ENCODE measurements at regions of chr3 and their contacts with region 1.

Region 1: GRCh38 chr3:134485718-134486576 is at the starts of genes ANAPC13 and CEP63:
- DNase-seq: peak; percentile 98
- ATAC-seq: peak; percentile 81
- H3K4me3 ChIP-seq: peak within 1 kb of the TSS; percentile 74 to 98 (median 95)
- H3K4me3 Mint-ChIP-seq: peak within 1 kb of the TSS; percentile 100
- H3K27ac ChIP-seq: peak within 1 kb of the TSS; percentile 78 to 89
- H3K27ac Mint-ChIP-seq: peak within 1 kb of the TSS; percentile 100
- H3K4me1 ChIP-seq: peaks cover 23 to 40% of the 10 kb centered on the region in 2 donors
- H3K4me1 Mint-ChIP-seq: peaks cover 45% of the 10 kb centered on the region
- H3K27me3 ChIP-seq: no peaks in the 10 kb centered on the region
- H3K27me3 Mint-ChIP-seq: no peaks in the 10 kb centered on the region
- CTCF ChIP-seq: no peak
- total RNA-seq, gene ANAPC13: 26.7 and 29.3 TPM in 2 replicates
- total RNA-seq, gene CEP63: 35.5 and 35.6 TPM in 2 replicates

Region 2: GRCh38 chr3:132659365-132660051 is 1826.4 kb before region 1 on chr3 and contains the start of gene ACAD11:
- CTCF ChIA-PET with region 1: no interaction called
- POLR2A ChIA-PET with region 1: no interaction called
- intact Hi-C with region 1: loop called (anchors 5 kb)
- DNase-seq: peak; percentile 78
- ATAC-seq: peak; percentile 71
- H3K4me3 ChIP-seq: peak within 1 kb of the TSS; percentile 67 to 97 (median 77)
- H3K4me3 Mint-ChIP-seq: peak within 1 kb of the TSS; percentile 97
- H3K27ac ChIP-seq: peak within 1 kb of the TSS; percentile 69 to 80
- H3K27ac Mint-ChIP-seq: peak within 1 kb of the TSS; percentile 95
- H3K4me1 ChIP-seq: peaks cover 15 to 21% of the 10 kb centered on the region in 2 donors
- H3K4me1 Mint-ChIP-seq: peaks cover 31% of the 10 kb centered on the region
- H3K27me3 ChIP-seq: no peaks in the 10 kb centered on the region
- H3K27me3 Mint-ChIP-seq: no peaks in the 10 kb centered on the region
- CTCF ChIP-seq: peak; percentile 62
- total RNA-seq, gene ACAD11: 26.9 and 30.2 TPM in 2 replicates

Region 3: GRCh38 chr3:133661454-133662277 is 824.3 kb before region 1 on chr3 and contains the start of gene TOPBP1:
- CTCF ChIA-PET with region 1: no interaction called
- POLR2A ChIA-PET with region 1: no interaction called
- intact Hi-C with region 1: loop called (anchors 5 kb)
- DNase-seq: peak; percentile 88
- ATAC-seq: peak; percentile 84
- H3K4me3 ChIP-seq: peak within 1 kb of the TSS; percentile 74 to 95 (median 91)
- H3K4me3 Mint-ChIP-seq: peak within 1 kb of the TSS; percentile 98
- H3K27ac ChIP-seq: peak within 1 kb of the TSS; percentile 67 to 87
- H3K27ac Mint-ChIP-seq: peak within 1 kb of the TSS; percentile 95
- H3K4me1 ChIP-seq: peaks cover 19 to 26% of the 10 kb centered on the region in 2 donors
- H3K4me1 Mint-ChIP-seq: peaks cover 41% of the 10 kb centered on the region
- H3K27me3 ChIP-seq: no peaks in the 10 kb centered on the region
- H3K27me3 Mint-ChIP-seq: no peaks in the 10 kb centered on the region
- CTCF ChIP-seq: no peak
- total RNA-seq, gene TOPBP1: 47.7 and 53.7 TPM in 2 replicates

Region 4: GRCh38 chr3:133805527-133806475 is 680.1 kb before region 1 on chr3 and contains the start of gene SRPRB:
- CTCF ChIA-PET with region 1: no interaction called
- POLR2A ChIA-PET with region 1: no interaction called
- intact Hi-C with region 1: loop called (anchors 5 kb)
- DNase-seq: peak; percentile 95
- ATAC-seq: peak; percentile 98
- H3K4me3 ChIP-seq: peak within 1 kb of the TSS; percentile 56 to 95 (median 87)
- H3K4me3 Mint-ChIP-seq: peak within 1 kb of the TSS; percentile 99
- H3K27ac ChIP-seq: peak within 1 kb of the TSS; percentile 75 to 80
- H3K27ac Mint-ChIP-seq: peak within 1 kb of the TSS; percentile 94
- H3K4me1 ChIP-seq: peaks cover 11 to 13% of the 10 kb centered on the region in 2 donors
- H3K4me1 Mint-ChIP-seq: peaks cover 18% of the 10 kb centered on the region
- H3K27me3 ChIP-seq: no peaks in the 10 kb centered on the region
- H3K27me3 Mint-ChIP-seq: no peaks in the 10 kb centered on the region
- CTCF ChIP-seq: no peak
- total RNA-seq, gene SRPRB: 28.8 and 29.7 TPM in 2 replicates

Region 5: DNA sequence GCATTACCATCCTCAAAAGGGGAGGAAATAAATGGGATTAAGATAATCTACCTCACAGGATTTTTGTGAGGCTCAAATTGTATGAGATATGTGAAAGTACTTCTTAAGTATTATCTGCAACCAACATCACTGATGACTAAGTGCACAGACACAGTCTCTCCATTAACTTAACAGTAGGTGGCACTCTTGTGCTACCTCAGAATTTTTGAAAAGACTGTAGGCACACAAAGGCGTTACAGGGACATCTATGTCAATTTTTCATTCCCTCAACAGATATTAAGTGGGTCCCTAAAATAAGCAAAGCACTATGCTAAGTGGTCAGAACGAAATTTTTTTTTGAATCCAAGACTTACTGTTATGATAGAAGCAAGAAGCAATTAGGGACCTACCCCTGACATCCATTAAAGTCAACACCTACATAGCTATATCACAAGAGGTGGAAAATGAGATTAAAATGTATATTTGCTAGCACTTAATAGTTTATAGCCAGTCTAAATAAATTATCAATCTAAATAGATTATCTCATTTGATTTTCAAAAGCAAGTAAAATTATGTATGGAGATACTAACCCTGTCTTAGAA is 288.2 kb before region 1 on chr3:
- CTCF ChIA-PET with region 1: interaction called, 15 read pairs
- POLR2A ChIA-PET with region 1: no interaction called
- intact Hi-C with region 1: no loop called
- DNase-seq: peak; percentile 52
- ATAC-seq: peak; percentile 54
- H3K4me3 ChIP-seq: no peak overlapping the region
- H3K4me3 Mint-ChIP-seq: no peak overlapping the region
- H3K27ac ChIP-seq: no peak overlapping the region
- H3K27ac Mint-ChIP-seq: no peak overlapping the region
- H3K4me1 ChIP-seq: no peaks in the 10 kb centered on the region
- H3K4me1 Mint-ChIP-seq: no peaks in the 10 kb centered on the region
- H3K27me3 ChIP-seq: no peaks in the 10 kb centered on the region
- H3K27me3 Mint-ChIP-seq: no peaks in the 10 kb centered on the region
- CTCF ChIP-seq: peak; percentile 78

Region 6: GRCh38 chr3:134250717-134251220 is 235.2 kb before region 1 on chr3 and contains the start of gene RYK:
- CTCF ChIA-PET with region 1: interaction called, 5 read pairs
- POLR2A ChIA-PET with region 1: interaction called, 4 read pairs
- intact Hi-C with region 1: loop called (anchors 1 kb)
- DNase-seq: peak; percentile 90
- ATAC-seq: peak; percentile 73
- H3K4me3 ChIP-seq: peak within 1 kb of the TSS; percentile 69 to 90 (median 74)
- H3K4me3 Mint-ChIP-seq: peak within 1 kb of the TSS; percentile 93
- H3K27ac ChIP-seq: peak within 1 kb of the TSS; percentile 71 to 82
- H3K27ac Mint-ChIP-seq: peak within 1 kb of the TSS; percentile 93
- H3K4me1 ChIP-seq: peaks cover 29 to 30% of the 10 kb centered on the region in 2 donors
- H3K4me1 Mint-ChIP-seq: peaks cover 49% of the 10 kb centered on the region
- H3K27me3 ChIP-seq: no peaks in the 10 kb centered on the region
- H3K27me3 Mint-ChIP-seq: no peaks in the 10 kb centered on the region
- CTCF ChIP-seq: no peak
- total RNA-seq, gene RYK: 63.9 and 67.7 TPM in 2 replicates

Region 7: DNA sequence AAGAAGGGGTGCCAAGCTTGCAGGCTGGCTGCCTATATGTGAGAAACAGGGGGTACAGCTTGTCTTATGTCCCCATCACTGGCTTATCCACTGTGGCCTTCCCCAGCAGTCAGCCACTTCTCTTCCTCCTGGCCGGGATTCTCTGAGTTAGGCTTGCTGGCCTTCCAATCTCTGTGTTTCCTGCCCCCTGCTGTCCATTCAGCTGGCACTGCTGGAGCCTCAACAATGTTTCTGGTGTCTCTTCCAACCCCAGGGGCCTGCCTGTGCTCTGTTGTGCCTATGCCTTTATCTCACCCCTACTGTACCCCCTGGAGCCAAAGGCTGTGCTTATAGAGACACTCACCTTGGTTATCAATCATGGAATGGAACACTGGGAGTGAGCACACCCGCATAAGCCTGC is 36.7 kb before region 1 on chr3:
- CTCF ChIA-PET with region 1: no interaction called
- POLR2A ChIA-PET with region 1: no interaction called
- intact Hi-C with region 1: no loop called
- DNase-seq: no peak
- ATAC-seq: no peak
- H3K4me3 ChIP-seq: no peak overlapping the region
- H3K4me3 Mint-ChIP-seq: no peak overlapping the region
- H3K27ac ChIP-seq: no peak overlapping the region
- H3K27ac Mint-ChIP-seq: no peak overlapping the region
- H3K4me1 ChIP-seq: no peaks in the 10 kb centered on the region
- H3K4me1 Mint-ChIP-seq: no peaks in the 10 kb centered on the region
- H3K27me3 ChIP-seq: peaks cover 0 to 32% (median 0%) of the 10 kb centered on the region in 4 experiments
- H3K27me3 Mint-ChIP-seq: peaks cover 48% of the 10 kb centered on the region
- CTCF ChIP-seq: no peak

Region 8: GRCh38 chr3:134473868-134474546 is 11.9 kb before region 1 on chr3:
- CTCF ChIA-PET with region 1: interaction called, 91 read pairs
- POLR2A ChIA-PET with region 1: interaction called, 3 read pairs
- intact Hi-C with region 1: no loop called
- DNase-seq: peak; percentile 76
- ATAC-seq: peak; percentile 58
- H3K4me3 ChIP-seq: no peak overlapping the region
- H3K4me3 Mint-ChIP-seq: no peak overlapping the region
- H3K27ac ChIP-seq: no peak overlapping the region
- H3K27ac Mint-ChIP-seq: no peak overlapping the region
- H3K4me1 ChIP-seq: no peaks in the 10 kb centered on the region
- H3K4me1 Mint-ChIP-seq: no peaks in the 10 kb centered on the region
- H3K27me3 ChIP-seq: no peaks in the 10 kb centered on the region
- H3K27me3 Mint-ChIP-seq: no peaks in the 10 kb centered on the region
- CTCF ChIP-seq: peak; percentile 81